MCF 10A (cell line): ENCODE measurements at regions of chr20 and their contacts with region 1.

Region 1: GRCh38 chr20:50929299-50930138 is 1.7 kb downstream of the ADNP start:
- DNase-seq: peak; percentile 96
- H3K4me3 Mint-ChIP-seq: peak overlapping the region; percentile 90
- H3K27ac Mint-ChIP-seq: peak overlapping the region; percentile 73
- H3K4me1 Mint-ChIP-seq: peaks cover 37% of the 10 kb centered on the region
- H3K27me3 Mint-ChIP-seq: no peaks in the 10 kb centered on the region
- CTCF ChIP-seq: peak; percentile 90

Region 2: DNA sequence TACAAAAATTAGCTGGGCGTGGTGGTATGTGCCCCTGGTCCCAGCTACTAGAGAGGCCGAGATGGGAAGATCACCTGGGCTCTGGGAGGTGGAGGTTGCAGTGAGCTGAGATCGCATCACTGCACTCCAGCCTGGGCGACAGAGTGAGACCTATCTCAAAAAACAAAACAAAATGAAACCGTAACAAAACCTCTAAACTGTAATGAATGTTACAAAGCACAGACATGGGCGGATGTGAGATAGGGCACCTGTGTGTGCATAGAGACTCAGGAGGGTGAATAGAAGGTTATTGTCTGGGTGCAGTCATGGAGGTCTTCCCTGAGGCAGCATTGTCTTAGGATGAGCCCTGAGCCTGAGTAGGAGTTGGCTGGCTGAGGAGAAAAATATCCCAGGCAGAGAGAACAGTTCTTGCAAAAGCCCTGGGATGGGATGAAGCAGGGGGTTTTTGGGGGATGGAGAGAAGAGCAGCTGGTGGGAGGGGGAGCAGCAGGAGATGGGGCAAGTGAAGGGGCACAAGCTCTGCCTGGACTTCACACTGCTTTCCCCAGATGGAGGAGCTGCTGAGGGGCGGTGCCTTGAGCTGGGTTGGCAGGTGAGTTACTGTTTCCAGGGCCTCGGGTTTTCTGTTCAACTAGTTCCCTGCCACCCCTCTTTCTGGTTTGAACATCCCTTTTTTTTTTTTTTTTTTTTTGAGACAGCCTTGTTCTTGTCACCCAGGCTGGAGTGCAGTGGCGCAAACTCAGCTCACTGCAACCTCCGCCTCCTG is 129.4 kb before region 1 on chr20:
- CTCF ChIA-PET with region 1: interaction called, 256 read pairs
- POLR2A ChIA-PET with region 1: interaction called, 37 read pairs
- intact Hi-C with region 1: no loop called
- DNase-seq: no peak
- H3K4me3 Mint-ChIP-seq: no peak overlapping the region
- H3K27ac Mint-ChIP-seq: no peak overlapping the region
- H3K4me1 Mint-ChIP-seq: no peaks in the 10 kb centered on the region
- H3K27me3 Mint-ChIP-seq: no peaks in the 10 kb centered on the region
- CTCF ChIP-seq: no peak

Region 3: GRCh38 chr20:50831622-50832021 is 97.9 kb before region 1 on chr20:
- CTCF ChIA-PET with region 1: interaction called, 18 read pairs
- POLR2A ChIA-PET with region 1: interaction called, 10 read pairs
- intact Hi-C with region 1: no loop called
- DNase-seq: no peak
- H3K4me3 Mint-ChIP-seq: no peak overlapping the region
- H3K27ac Mint-ChIP-seq: no peak overlapping the region
- H3K4me1 Mint-ChIP-seq: peaks cover 9% of the 10 kb centered on the region
- H3K27me3 Mint-ChIP-seq: no peaks in the 10 kb centered on the region
- CTCF ChIP-seq: no peak

Region 4: DNA sequence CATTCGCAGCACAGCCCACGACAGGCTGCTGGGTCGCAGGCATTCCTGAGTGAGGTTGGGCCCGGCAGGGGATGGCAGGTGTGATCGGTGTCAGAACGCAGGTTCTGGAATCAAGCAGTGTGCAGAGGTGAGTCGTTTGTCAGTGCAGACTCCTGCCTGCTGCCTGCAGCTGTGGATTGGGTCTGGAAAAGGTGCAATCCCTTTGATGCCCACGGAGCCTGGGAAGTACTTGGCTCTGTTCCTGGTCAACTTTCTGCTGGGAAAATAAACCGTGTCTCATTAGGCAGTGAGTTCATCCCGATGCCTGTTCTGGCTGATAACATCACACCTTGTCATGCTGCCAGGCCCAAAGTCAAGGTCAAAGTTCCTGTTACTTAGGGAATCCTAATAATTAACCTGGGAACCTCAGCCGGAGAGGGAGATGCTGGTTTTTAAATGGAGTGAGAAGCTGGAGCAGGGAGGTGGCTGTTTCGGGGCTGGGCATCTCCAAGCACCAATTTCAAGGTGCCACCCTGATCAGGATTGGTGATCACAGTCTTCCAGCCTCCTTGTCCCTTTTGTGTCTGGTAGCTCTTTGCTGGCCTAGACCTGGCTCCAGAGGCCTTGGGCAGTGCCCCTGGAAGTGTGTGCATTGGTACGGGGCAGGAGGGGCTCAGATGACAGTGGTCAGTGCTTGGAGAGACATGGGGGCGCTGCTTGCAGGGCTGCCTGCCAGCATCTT is 73.3 kb before region 1 on chr20:
- CTCF ChIA-PET with region 1: interaction called, 22 read pairs
- POLR2A ChIA-PET with region 1: interaction called, 149 read pairs
- intact Hi-C with region 1: no loop called
- DNase-seq: peak; percentile 79
- H3K4me3 Mint-ChIP-seq: no peak overlapping the region
- H3K27ac Mint-ChIP-seq: peak overlapping the region; percentile 67
- H3K4me1 Mint-ChIP-seq: peaks cover 19% of the 10 kb centered on the region
- H3K27me3 Mint-ChIP-seq: no peaks in the 10 kb centered on the region
- CTCF ChIP-seq: no peak

Region 5: DNA sequence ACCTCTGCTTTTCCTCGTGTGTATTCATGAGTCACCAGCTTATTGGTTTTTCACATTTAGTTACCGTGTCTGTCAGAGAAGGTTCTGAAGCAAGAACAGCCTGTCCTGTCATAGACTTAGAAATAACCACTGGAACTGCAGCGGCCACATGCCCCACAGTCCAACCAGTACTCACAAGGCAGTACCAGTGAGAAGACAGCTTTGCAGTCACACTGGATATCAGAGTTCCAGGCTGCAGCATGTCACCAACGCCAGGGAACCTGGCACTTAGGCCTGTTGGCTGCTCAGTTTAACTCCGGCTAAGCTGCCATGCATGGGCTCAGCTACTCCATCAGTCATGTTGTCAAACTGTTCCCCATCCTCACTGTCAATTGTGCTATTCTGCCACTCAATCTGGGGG is 38.4 kb before region 1 on chr20:
- CTCF ChIA-PET with region 1: interaction called, 17 read pairs
- POLR2A ChIA-PET with region 1: interaction called, 6 read pairs
- intact Hi-C with region 1: no loop called
- DNase-seq: no peak
- H3K4me3 Mint-ChIP-seq: no peak overlapping the region
- H3K27ac Mint-ChIP-seq: no peak overlapping the region
- H3K4me1 Mint-ChIP-seq: no peaks in the 10 kb centered on the region
- H3K27me3 Mint-ChIP-seq: no peaks in the 10 kb centered on the region
- CTCF ChIP-seq: no peak

Region 6: DNA sequence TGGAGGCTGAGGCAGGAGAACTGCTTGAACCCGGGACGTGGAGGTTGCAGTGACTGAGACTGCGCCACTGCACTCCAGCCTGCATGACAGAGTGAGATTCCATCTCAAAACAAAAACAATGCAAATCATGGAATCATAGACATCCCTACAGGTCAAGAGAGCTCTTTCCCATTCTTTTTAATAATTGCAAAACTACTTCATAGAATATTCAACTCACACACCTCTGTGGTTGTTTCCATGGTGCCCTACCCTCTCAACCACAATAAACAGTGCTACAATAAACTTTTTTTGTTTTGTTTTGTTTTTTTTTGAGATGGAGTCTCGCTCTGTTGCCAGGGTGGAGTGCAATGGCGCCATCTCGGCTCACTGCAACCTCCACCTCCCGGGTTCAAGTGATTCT is 13.6 kb after region 1 on chr20:
- CTCF ChIA-PET with region 1: interaction called, 46 read pairs
- POLR2A ChIA-PET with region 1: interaction called, 10 read pairs
- intact Hi-C with region 1: no loop called
- DNase-seq: no peak
- H3K4me3 Mint-ChIP-seq: no peak overlapping the region
- H3K27ac Mint-ChIP-seq: no peak overlapping the region
- H3K4me1 Mint-ChIP-seq: no peaks in the 10 kb centered on the region
- H3K27me3 Mint-ChIP-seq: no peaks in the 10 kb centered on the region
- CTCF ChIP-seq: no peak

Region 7: DNA sequence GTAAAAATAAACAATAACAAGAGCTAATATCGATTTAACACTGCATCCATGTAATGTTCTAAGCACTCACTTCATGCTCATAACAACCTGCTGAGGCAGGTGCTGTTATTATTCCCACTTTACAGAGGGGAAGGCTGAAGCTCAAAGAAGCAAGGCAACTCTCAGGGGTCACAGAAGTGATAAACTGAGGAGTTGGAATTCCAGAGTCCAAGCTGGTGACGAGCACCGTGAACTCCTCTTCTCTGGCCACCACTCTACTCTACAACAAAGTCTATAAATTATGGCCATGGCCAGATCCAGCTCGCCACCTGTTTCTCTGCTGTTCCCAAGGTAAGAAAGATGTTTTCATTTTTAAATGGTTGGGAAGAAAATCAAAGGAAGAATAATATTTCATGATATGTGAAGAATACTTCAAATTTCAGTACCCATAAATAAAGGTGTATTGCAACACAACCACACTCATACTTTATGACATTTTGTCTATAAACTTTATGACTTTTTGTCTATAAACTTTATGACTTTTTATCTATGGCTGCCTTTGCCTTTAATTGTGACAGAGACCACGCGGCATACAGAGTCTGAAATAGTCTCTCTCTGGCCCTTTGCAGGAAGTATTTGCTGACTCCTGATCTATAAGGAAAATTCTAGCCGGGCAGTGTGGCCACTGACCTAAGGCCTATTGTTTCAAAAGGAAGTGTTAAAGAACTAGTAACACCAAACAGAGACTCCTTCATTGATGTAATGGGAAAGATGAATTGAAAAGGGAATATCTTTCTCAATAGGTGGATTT is 206.6 kb after region 1 on chr20:
- CTCF ChIA-PET with region 1: no interaction called
- POLR2A ChIA-PET with region 1: no interaction called
- intact Hi-C with region 1: no loop called
- DNase-seq: no peak
- H3K4me3 Mint-ChIP-seq: no peak overlapping the region
- H3K27ac Mint-ChIP-seq: no peak overlapping the region
- H3K4me1 Mint-ChIP-seq: no peaks in the 10 kb centered on the region
- H3K27me3 Mint-ChIP-seq: no peaks in the 10 kb centered on the region
- CTCF ChIP-seq: no peak